CD4-positive, alpha-beta memory T cell (primary cell): ENCODE measurements at regions of chr16 and their contacts with region 1.

Region 1: DNA sequence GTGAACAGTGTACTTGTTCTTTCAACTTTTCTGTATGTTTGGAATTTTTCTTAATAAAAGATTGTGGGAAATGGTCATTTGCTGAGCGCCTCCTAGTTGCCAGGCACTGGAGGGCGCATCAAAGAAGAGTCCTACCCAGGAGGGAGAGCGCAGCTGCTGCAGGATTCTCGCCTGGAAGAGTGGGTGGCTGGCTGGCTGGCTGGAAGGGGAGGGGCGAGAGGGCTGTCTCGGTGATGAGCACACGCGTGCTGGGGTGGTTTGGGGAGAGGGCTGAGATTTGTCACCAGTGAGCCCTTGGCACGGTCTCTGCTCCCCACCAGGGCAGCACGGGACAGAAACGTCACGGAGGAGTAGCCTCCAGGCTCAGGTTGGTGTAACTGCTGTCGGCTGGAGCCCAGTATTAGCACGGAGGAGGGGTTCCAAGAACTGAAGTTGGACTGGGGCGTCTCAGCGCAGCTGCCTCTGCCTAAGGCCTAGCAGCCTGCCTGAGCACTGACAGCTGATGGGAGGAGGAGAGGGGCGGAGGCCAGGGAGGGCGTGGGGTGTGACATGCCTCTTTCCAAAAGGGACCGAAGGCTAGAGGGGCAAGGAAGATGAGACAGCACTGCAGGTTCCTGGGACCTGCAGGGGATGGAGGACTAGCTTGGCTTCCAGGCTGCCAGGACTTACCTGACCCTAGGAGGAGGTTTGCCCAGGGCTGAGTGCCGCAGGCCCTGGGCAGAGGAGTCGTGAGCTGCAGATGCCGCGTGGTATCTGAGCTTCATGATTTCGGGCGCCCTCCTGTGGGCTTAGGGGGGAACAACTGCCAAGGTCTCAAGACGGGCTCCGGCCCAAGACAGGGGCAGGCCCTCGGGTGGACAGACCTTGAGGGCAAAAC is 5.7 kb downstream of the LDHD start:
- DNase-seq: peak; percentile 79 to 84 (median 80)
- H3K4me3 ChIP-seq: peak overlapping the region; percentile 5 to 39
- H3K4me3 Mint-ChIP-seq: peak overlapping the region; percentile 9 to 77 (median 61)
- H3K27ac ChIP-seq: peak overlapping the region; percentile 56
- H3K27ac Mint-ChIP-seq: peak overlapping the region; percentile 84 to 95 (median 92)
- H3K4me1 ChIP-seq: peaks cover 58% of the 10 kb centered on the region
- H3K4me1 Mint-ChIP-seq: peaks cover 32 to 62% (median 47%) of the 10 kb centered on the region in 4 donors
- H3K27me3 ChIP-seq: no peaks in the 10 kb centered on the region
- H3K27me3 Mint-ChIP-seq: peaks cover 0 to 1% of the 10 kb centered on the region in 2 donors

Region 2: GRCh38 chr16:73891129-73891542 is 1219.7 kb before region 1 on chr16:
- CTCF ChIA-PET with region 1: no interaction called
- POLR2A ChIA-PET with region 1: no interaction called
- intact Hi-C with region 1: no loop called
- DNase-seq: no peak
- H3K4me3 ChIP-seq: no peak overlapping the region
- H3K4me3 Mint-ChIP-seq: peak overlapping the region in 4 of 8 donors; percentile 9 to 43 (median 32)
- H3K27ac ChIP-seq: no peak overlapping the region
- H3K27ac Mint-ChIP-seq: no peak overlapping the region
- H3K4me1 ChIP-seq: no peaks in the 10 kb centered on the region
- H3K4me1 Mint-ChIP-seq: peaks cover 0 to 6% (median 1%) of the 10 kb centered on the region in 4 donors
- H3K27me3 ChIP-seq: no peaks in the 10 kb centered on the region
- H3K27me3 Mint-ChIP-seq: peaks cover 7 to 21% of the 10 kb centered on the region in 2 donors

Region 3: DNA sequence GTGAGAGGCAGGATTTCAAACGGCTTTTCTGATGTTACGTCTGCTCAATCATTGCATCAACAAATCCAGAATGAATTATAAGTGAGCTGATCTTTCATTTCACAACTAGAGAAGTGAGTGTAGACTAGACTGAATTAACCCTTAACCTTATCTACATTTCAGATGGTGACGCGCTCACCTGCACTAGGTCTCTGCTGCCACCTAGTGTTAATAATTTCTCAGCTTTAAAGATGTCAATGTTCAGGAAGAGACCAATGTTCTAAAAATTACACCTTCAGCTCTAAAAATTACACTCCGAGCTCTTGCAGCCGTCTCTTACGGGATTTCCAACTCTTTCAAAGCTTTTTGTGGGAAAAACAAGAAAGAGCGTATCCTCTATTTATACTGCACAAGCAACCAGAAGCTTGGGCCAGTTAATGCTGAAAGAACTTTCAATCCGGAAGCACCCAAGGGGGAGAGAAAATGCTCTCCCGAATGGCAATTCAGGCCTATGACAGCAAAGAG is 248.1 kb before region 1 on chr16:
- CTCF ChIA-PET with region 1: interaction called, 12 read pairs
- POLR2A ChIA-PET with region 1: no interaction called
- intact Hi-C with region 1: no loop called
- DNase-seq: peak in 4 of 5 donors; percentile 41 to 56 (median 46)
- H3K4me3 ChIP-seq: no peak overlapping the region
- H3K4me3 Mint-ChIP-seq: no peak overlapping the region
- H3K27ac ChIP-seq: no peak overlapping the region
- H3K27ac Mint-ChIP-seq: peak overlapping the region in 4 of 7 donors; percentile 57 to 77 (median 62)
- H3K4me1 ChIP-seq: peaks cover 7% of the 10 kb centered on the region
- H3K4me1 Mint-ChIP-seq: peaks cover 7 to 17% (median 11%) of the 10 kb centered on the region in 4 donors
- H3K27me3 ChIP-seq: no peaks in the 10 kb centered on the region
- H3K27me3 Mint-ChIP-seq: no peaks in the 10 kb centered on the region

Region 4: GRCh38 chr16:74874912-74875546 is 235.8 kb before region 1 on chr16:
- CTCF ChIA-PET with region 1: no interaction called
- POLR2A ChIA-PET with region 1: no interaction called
- intact Hi-C with region 1: no loop called
- DNase-seq: no peak
- H3K4me3 ChIP-seq: no peak overlapping the region
- H3K4me3 Mint-ChIP-seq: no peak overlapping the region
- H3K27ac ChIP-seq: no peak overlapping the region
- H3K27ac Mint-ChIP-seq: peak overlapping the region in 4 of 7 donors; percentile 26 to 80 (median 64)
- H3K4me1 ChIP-seq: peaks cover 4% of the 10 kb centered on the region
- H3K4me1 Mint-ChIP-seq: peaks cover 3 to 16% (median 8%) of the 10 kb centered on the region in 4 donors
- H3K27me3 ChIP-seq: no peaks in the 10 kb centered on the region
- H3K27me3 Mint-ChIP-seq: no peaks in the 10 kb centered on the region

Region 5: GRCh38 chr16:75011634-75012307 is 99.1 kb before region 1 on chr16:
- CTCF ChIA-PET with region 1: interaction called, 33 read pairs
- POLR2A ChIA-PET with region 1: interaction called, 4 read pairs
- intact Hi-C with region 1: no loop called
- DNase-seq: peak; percentile 13 to 78 (median 26)
- H3K4me3 ChIP-seq: no peak overlapping the region
- H3K4me3 Mint-ChIP-seq: peak overlapping the region in 6 of 8 donors; percentile 63 to 85 (median 82)
- H3K27ac ChIP-seq: peak overlapping the region; percentile 47
- H3K27ac Mint-ChIP-seq: peak overlapping the region; percentile 67 to 94 (median 91)
- H3K4me1 ChIP-seq: peaks cover 22% of the 10 kb centered on the region
- H3K4me1 Mint-ChIP-seq: peaks cover 14 to 26% (median 17%) of the 10 kb centered on the region in 4 donors
- H3K27me3 ChIP-seq: no peaks in the 10 kb centered on the region
- H3K27me3 Mint-ChIP-seq: no peaks in the 10 kb centered on the region

Region 6: GRCh38 chr16:75074920-75075687 is 35.8 kb before region 1 on chr16:
- CTCF ChIA-PET with region 1: interaction called, 54 read pairs
- POLR2A ChIA-PET with region 1: interaction called, 48 read pairs
- intact Hi-C with region 1: loop called (anchors 1 kb)
- DNase-seq: peak; percentile 86 to 91 (median 87)
- H3K4me3 ChIP-seq: peak overlapping the region; percentile 5 to 44
- H3K4me3 Mint-ChIP-seq: peak overlapping the region; percentile 59 to 81 (median 72)
- H3K27ac ChIP-seq: peak overlapping the region; percentile 39
- H3K27ac Mint-ChIP-seq: peak overlapping the region; percentile 75 to 98 (median 95)
- H3K4me1 ChIP-seq: peaks cover 53% of the 10 kb centered on the region
- H3K4me1 Mint-ChIP-seq: peaks cover 45 to 66% (median 59%) of the 10 kb centered on the region in 4 donors
- H3K27me3 ChIP-seq: no peaks in the 10 kb centered on the region
- H3K27me3 Mint-ChIP-seq: no peaks in the 10 kb centered on the region

Region 7: DNA sequence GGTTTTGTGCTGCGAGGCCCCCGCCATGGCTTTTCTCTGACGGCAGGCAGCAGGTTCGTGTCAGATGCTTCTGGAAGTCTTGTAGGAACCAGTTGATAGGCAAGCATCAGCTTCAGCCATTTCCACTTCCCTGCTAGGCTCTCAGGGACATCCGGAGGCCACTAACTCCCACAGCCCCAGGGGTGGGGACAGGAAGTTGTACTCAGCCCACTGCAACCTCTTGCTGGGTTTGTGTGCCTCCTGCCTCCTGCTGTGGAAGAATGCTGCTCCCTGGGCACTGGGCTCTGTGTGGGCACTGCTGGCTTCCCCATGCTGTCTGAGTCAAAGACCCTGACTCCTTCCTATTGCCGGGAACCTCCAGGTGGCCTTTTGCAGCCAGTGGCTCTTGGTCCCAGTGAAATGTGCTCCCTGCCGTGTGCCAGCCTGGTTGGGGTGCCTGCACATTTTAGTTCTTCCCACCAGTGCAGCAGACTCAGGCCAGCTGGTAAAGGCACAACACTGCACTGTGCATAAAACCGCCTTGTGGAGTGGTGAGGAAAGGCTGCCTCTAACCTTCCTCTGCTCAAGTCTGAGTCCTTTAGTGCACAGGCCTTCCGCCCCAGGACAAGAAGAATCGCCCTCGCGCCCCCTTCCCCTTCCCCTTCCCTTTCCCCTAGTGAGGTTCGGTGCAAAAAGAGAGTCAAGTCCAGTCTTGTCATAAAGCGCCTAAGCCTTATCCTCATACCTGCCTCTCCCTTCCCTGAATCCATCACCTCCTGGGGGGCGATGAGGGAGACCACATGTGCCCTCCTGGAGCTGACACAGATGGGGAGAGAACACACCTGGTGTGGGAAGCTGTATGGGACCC is 10.9 kb before region 1 on chr16:
- CTCF ChIA-PET with region 1: interaction called, 98 read pairs
- POLR2A ChIA-PET with region 1: interaction called, 45 read pairs
- intact Hi-C with region 1: no loop called
- DNase-seq: peak; percentile 36 to 58 (median 43)
- H3K4me3 ChIP-seq: peak overlapping the region in 1 of 2 donors; percentile 6
- H3K4me3 Mint-ChIP-seq: peak overlapping the region; percentile 10 to 82 (median 63)
- H3K27ac ChIP-seq: peak overlapping the region; percentile 70
- H3K27ac Mint-ChIP-seq: peak overlapping the region; percentile 93 to 98 (median 97)
- H3K4me1 ChIP-seq: peaks cover 45% of the 10 kb centered on the region
- H3K4me1 Mint-ChIP-seq: peaks cover 31 to 61% (median 37%) of the 10 kb centered on the region in 4 donors
- H3K27me3 ChIP-seq: no peaks in the 10 kb centered on the region
- H3K27me3 Mint-ChIP-seq: no peaks in the 10 kb centered on the region

Region 8: GRCh38 chr16:75218256-75219070 is 107.6 kb after region 1 on chr16 and contains the start of gene CTRB1:
- CTCF ChIA-PET with region 1: no interaction called
- POLR2A ChIA-PET with region 1: no interaction called
- intact Hi-C with region 1: no loop called
- DNase-seq: no peak
- H3K4me3 ChIP-seq: peak within 1 kb of the TSS in 1 of 2 donors; percentile 10
- H3K4me3 Mint-ChIP-seq: peak within 1 kb of the TSS; percentile 74 to 95 (median 90)
- H3K27ac ChIP-seq: peak within 1 kb of the TSS; percentile 41
- H3K27ac Mint-ChIP-seq: peak within 1 kb of the TSS; percentile 16 to 91 (median 90)
- H3K4me1 ChIP-seq: peaks cover 7% of the 10 kb centered on the region
- H3K4me1 Mint-ChIP-seq: peaks cover 6 to 16% (median 10%) of the 10 kb centered on the region in 4 donors
- H3K27me3 ChIP-seq: no peaks in the 10 kb centered on the region
- H3K27me3 Mint-ChIP-seq: no peaks in the 10 kb centered on the region
- total RNA-seq, gene CTRB1: not detected

Region 9: GRCh38 chr16:75238132-75238852 is 127.4 kb after region 1 on chr16:
- CTCF ChIA-PET with region 1: no interaction called
- POLR2A ChIA-PET with region 1: no interaction called
- intact Hi-C with region 1: no loop called
- DNase-seq: no peak
- H3K4me3 ChIP-seq: no peak overlapping the region
- H3K4me3 Mint-ChIP-seq: no peak overlapping the region
- H3K27ac ChIP-seq: no peak overlapping the region
- H3K27ac Mint-ChIP-seq: no peak overlapping the region
- H3K4me1 ChIP-seq: peaks cover 6% of the 10 kb centered on the region
- H3K4me1 Mint-ChIP-seq: peaks cover 0 to 5% (median 2%) of the 10 kb centered on the region in 4 donors
- H3K27me3 ChIP-seq: no peaks in the 10 kb centered on the region
- H3K27me3 Mint-ChIP-seq: no peaks in the 10 kb centered on the region